PC-9 (cell line): ENCODE measurements at regions of chr5 and their contacts with region 1.

Region 1: GRCh38 chr5:140700177-140701144 is at the start of gene ZMAT2:
- DNase-seq: peak; percentile 90 to 98
- H3K4me3 ChIP-seq: peak within 1 kb of the TSS; percentile 81
- H3K27ac ChIP-seq: peak within 1 kb of the TSS; percentile 37
- H3K4me1 ChIP-seq: peaks cover 13% of the 10 kb centered on the region; the same call in 1 of the 2 replicates
- H3K27me3 ChIP-seq: no peaks in the 10 kb centered on the region
- CTCF ChIP-seq: no peak
- total RNA-seq, gene ZMAT2: 53.5 and 60.1 TPM in 2 replicates

Region 2: DNA sequence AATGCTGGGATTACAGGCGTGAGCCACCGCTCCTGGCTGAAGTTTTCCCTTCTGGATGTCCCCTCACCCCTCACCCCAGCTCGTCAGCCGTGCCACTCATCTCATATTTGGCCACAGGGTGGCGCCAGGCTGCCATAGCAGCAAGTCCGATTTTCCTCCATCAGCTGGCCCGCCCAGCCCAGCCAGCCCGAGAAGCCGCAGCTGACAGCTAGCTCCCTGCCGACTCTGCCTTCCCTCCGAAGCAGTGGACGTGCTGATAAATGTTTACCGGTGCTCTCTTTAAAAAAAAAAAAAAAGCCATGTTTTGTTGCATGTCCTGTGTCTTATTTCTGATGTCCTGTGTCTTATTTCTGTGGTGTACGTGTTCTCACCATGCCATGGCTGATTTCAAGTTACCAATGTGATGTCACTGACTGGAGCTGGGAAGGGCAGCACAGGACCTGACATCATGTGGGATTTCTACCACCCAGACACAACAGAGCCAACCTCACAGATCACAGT is 455.9 kb before region 1 on chr5:
- CTCF ChIA-PET with region 1: no interaction called
- POLR2A ChIA-PET with region 1: interaction called, 10 read pairs
- intact Hi-C with region 1: no loop called
- DNase-seq: peak; percentile 77 to 82
- H3K4me3 ChIP-seq: no peak overlapping the region
- H3K27ac ChIP-seq: no peak overlapping the region
- H3K4me1 ChIP-seq: peaks cover 45% of the 10 kb centered on the region
- H3K27me3 ChIP-seq: no peaks in the 10 kb centered on the region
- CTCF ChIP-seq: peak; percentile 91

Region 3: DNA sequence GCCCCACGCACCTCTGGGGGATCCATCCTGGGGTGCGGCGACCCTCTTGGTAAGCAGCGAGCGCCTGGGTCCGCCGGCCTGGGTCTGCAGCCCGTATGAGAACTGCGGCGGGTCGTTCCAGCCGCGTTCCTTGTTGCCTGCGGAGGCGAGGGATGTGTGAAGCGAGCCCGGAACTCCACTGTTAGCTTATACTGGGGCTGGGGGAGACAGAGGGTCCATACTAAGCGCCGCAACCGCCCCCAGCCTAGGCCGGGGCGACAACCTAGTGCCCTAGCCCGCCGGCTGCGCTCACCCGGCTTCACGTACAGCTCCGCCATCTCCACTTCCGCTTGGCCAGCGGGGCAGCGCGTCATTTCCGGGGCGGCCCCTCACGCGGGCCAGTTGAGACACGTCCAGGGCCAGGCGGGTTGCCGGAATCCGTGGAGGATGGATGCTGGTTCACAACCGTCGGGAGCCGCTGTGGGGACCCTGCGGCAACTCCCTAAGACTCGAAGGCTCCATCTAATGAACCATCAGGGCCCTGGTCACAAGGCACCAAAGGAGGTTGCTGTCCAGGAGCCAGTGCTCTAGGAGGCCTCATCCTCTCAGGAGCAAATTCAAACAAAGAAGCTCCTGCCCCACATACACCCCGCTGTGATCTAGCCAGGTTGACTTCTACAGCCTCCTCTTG is 143.2 kb before region 1 on chr5 and contains the start of gene SRA1:
- CTCF ChIA-PET with region 1: no interaction called
- POLR2A ChIA-PET with region 1: interaction called, 12 read pairs
- intact Hi-C with region 1: no loop called
- DNase-seq: peak; percentile 78 to 89
- H3K4me3 ChIP-seq: peak within 1 kb of the TSS; percentile 73
- H3K27ac ChIP-seq: peak within 1 kb of the TSS; percentile 39; the same call in 1 of the 2 replicates
- H3K4me1 ChIP-seq: peaks cover 10% of the 10 kb centered on the region
- H3K27me3 ChIP-seq: no peaks in the 10 kb centered on the region
- CTCF ChIP-seq: no peak
- total RNA-seq, gene SRA1: 30.5 and 36.1 TPM in 2 replicates

Region 4: DNA sequence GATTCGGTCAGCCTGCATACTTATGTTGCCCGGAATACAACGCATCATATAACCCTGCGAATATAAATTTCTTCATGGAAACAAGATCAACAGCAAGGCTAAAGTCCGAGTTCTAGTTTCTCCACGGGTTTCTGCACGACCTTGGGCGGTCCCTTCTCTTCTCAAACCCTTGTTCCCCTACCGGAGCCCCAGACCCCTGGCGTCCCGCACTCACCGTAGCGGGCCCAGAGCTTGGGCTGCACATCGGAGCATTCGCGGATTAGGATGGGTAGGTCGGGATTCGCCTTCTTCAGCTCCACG is 53.5 kb before region 1 on chr5:
- CTCF ChIA-PET with region 1: no interaction called
- POLR2A ChIA-PET with region 1: interaction called, 10 read pairs
- intact Hi-C with region 1: no loop called
- DNase-seq: no peak
- H3K4me3 ChIP-seq: peak overlapping the region; percentile 84
- H3K27ac ChIP-seq: no peak overlapping the region
- H3K4me1 ChIP-seq: peaks cover 14% of the 10 kb centered on the region
- H3K27me3 ChIP-seq: no peaks in the 10 kb centered on the region
- CTCF ChIP-seq: no peak

Region 5: DNA sequence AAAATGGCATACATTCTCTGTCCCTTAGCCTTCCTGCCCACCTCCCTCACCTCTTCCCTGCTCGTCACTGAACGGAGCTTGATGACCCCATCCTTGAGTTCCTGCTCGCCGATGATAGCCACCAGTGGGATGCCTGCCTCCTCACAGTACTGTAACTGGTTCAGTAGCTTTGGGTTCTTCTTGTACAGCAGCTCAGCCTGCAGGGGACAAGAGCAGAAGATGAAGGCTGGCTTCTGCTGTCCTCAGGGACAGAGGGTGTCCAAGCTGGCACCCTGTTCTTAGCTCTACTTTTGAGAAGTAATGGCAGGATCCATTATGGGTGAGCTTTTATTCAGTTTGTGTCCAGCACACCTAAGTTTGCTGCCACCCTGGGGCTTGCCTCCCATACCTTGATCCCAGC is 25.8 kb before region 1 on chr5:
- CTCF ChIA-PET with region 1: no interaction called
- POLR2A ChIA-PET with region 1: interaction called, 13 read pairs
- intact Hi-C with region 1: no loop called
- DNase-seq: no peak
- H3K4me3 ChIP-seq: no peak overlapping the region
- H3K27ac ChIP-seq: no peak overlapping the region
- H3K4me1 ChIP-seq: no peaks in the 10 kb centered on the region
- H3K27me3 ChIP-seq: no peaks in the 10 kb centered on the region
- CTCF ChIP-seq: no peak

Region 6: DNA sequence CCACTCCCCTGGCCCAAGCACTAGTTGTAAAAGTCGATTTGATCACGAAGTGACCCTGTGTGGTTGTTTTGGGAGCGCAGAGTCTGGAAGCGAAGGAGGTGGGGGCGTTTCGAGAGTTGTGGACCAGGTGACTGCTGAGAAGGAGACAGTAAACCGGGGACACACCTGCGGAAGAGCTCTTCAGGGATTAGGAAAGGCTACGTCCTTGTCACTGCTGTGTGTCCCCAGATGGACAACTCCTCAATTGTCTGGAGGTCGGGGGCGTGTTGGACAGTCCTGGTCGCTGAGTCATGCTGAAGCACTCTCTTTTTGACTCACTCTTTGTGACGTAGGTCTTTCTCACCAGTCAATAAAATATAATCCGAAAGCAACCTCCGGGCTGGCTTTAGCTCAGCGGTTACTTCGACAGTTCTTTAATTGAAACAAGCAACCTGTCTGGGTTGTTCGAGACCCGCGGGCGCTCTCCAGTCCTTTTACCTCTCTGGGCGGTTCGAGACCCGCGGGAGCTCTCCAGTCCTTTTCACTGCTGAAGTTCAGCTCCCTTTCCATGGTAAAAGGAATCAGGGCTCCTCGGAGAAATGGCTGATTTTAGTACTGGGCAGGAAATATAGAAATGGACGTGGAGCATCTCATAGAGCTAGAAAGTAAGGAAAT is 10.6 kb after region 1 on chr5:
- CTCF ChIA-PET with region 1: no interaction called
- POLR2A ChIA-PET with region 1: interaction called, 30 read pairs
- intact Hi-C with region 1: no loop called
- DNase-seq: peak; percentile 95 to 97
- H3K4me3 ChIP-seq: peak overlapping the region; percentile 71
- H3K27ac ChIP-seq: peak overlapping the region; percentile 94
- H3K4me1 ChIP-seq: peaks cover 5% of the 10 kb centered on the region
- H3K27me3 ChIP-seq: no peaks in the 10 kb centered on the region
- CTCF ChIP-seq: no peak